ENCODE measurements at regions of chr1 and their contacts with region 1.

Region 1: GRCh38 chr1:174204697-174205308 is 45.5 kb downstream of the RABGAP1L start:
- DNase-seq: no peak
- H3K4me3 Mint-ChIP-seq: no peak overlapping the region
- H3K27ac Mint-ChIP-seq: peak overlapping the region; percentile 67
- H3K4me1 Mint-ChIP-seq: peaks cover 54% of the 10 kb centered on the region
- H3K27me3 Mint-ChIP-seq: no peaks in the 10 kb centered on the region

Region 2: GRCh38 chr1:174110053-174110452 is 94.8 kb before region 1 on chr1:
- intact Hi-C with region 1: no loop called
- DNase-seq: no peak
- H3K4me3 Mint-ChIP-seq: no peak overlapping the region
- H3K27ac Mint-ChIP-seq: no peak overlapping the region
- H3K4me1 Mint-ChIP-seq: no peaks in the 10 kb centered on the region
- H3K27me3 Mint-ChIP-seq: peaks cover 10% of the 10 kb centered on the region

Region 3: DNA sequence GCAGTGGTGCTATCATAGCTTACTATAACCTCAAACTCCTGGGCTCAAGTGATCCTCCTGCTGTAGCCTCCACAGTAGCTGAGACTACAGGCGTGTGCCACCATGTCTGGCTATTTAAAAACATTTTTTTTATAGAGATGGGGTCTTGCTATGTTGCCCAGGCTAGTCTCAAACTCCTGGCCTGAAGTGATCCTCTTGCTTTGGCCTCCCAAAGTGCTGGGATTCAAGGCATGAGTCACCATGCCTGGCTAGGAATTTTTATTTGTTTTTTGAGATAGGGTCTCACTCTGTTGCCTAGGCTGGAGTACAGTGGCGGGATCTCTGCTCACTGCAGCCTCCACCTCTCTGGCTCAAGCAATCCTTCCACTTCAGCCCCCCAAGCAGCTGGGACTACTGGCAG is 54.3 kb before region 1 on chr1:
- intact Hi-C with region 1: no loop called
- DNase-seq: no peak
- H3K4me3 Mint-ChIP-seq: no peak overlapping the region
- H3K27ac Mint-ChIP-seq: no peak overlapping the region
- H3K4me1 Mint-ChIP-seq: peaks cover 24% of the 10 kb centered on the region
- H3K27me3 Mint-ChIP-seq: peaks cover 13% of the 10 kb centered on the region

Region 4: DNA sequence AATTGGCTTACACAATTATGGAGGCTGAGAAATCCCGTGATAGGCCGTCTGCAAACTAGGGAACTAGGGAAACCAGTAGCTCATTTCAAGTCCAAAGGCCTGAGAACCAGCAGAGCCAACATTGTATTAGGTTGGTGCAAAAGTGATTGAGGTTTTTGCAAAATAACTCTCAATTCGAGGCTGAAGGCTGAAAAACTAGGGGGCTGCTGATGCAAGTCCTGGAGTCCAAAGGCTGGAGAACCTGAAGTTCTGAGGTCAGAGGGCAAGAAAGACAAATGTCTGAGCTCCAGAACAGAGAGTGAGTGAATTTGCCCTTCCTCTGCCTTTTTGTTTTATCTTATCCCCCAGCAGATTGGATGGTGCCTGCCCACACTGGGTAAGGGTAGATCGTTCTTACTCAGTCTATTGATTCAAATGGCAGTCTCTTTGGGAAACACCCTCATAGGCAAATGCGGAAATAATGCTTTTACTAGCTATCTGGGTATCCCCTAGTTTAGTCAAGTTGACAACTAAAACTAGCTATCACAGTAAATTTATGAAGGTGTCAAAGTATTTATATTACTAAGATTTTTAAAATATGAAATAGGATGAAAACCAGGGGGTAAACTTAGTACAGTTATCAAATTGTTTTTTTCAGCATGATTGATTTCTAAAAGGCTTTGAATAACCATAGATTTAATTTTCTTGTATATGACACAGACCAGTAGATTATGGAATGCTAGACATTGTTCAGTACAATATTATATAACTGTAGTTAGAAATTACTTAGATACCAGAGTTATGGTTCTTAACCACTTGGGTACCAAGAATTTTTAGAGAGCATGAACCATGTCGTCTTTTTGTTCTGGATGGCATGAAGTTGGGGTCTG is 30.1 kb before region 1 on chr1:
- intact Hi-C with region 1: loop called (anchors 2 kb)
- DNase-seq: no peak
- H3K4me3 Mint-ChIP-seq: no peak overlapping the region
- H3K27ac Mint-ChIP-seq: no peak overlapping the region
- H3K4me1 Mint-ChIP-seq: peaks cover 26% of the 10 kb centered on the region
- H3K27me3 Mint-ChIP-seq: no peaks in the 10 kb centered on the region